ENCODE measurements at regions of chr1 and their contacts with region 1.

Region 1: DNA sequence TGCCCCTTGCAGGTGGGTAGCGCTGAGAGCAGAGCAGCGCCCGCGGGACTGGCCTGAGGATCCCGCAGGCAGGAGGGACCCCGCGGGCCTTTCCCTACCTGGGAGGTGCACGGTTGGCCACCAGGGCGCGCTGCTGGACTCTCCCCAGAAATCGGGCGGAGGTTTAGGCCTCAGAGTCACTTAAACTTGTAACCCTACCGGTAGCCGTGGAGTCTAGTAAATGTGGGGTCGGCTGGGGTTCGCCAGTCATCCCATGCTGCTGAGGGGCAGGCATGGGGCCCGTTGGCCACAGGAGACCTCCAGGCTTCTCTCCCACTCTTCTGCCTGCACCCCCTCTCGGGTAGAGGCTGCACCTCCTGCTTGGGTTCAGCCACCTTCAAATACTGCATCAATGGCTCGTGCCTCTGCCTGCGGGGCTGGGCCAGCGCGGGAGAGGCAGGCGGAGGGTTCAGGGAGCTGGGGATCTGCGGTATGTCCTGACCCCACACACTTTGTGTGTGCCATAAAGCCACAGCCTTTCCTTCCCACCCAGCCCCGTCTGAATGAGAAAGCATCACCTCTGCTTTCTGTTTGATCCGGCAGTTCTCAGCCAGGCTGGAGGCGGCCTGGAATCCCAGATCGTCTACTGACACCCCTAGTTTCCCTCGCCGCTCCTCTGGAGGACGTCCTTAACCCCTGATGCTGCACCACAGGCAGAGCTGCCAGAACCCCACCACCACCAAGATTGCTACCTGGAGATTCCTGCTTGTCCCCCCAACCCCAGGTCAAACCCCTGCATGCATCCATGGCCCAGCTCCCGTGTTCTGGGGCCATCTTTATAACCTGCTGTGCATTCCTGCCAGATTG is 12.3 kb upstream of the GSTM4 start:
- DNase-seq: peak; percentile 93
- ATAC-seq: peak; percentile 98
- H3K4me3 Mint-ChIP-seq: no peak overlapping the region
- H3K27ac Mint-ChIP-seq: peak overlapping the region; percentile 25
- H3K4me1 Mint-ChIP-seq: peaks cover 18% of the 10 kb centered on the region
- H3K27me3 Mint-ChIP-seq: peaks cover 8% of the 10 kb centered on the region

Region 2: GRCh38 chr1:109357616-109358015 is 286.0 kb before region 1 on chr1:
- CTCF ChIA-PET with region 1: no interaction called
- POLR2A ChIA-PET with region 1: no interaction called
- DNase-seq: no peak
- ATAC-seq: no peak
- H3K4me3 Mint-ChIP-seq: no peak overlapping the region
- H3K27ac Mint-ChIP-seq: no peak overlapping the region
- H3K4me1 Mint-ChIP-seq: peaks cover 9% of the 10 kb centered on the region
- H3K27me3 Mint-ChIP-seq: peaks cover 16% of the 10 kb centered on the region

Region 3: GRCh38 chr1:109532365-109533136 is 111.1 kb before region 1 on chr1:
- CTCF ChIA-PET with region 1: interaction called, 19 read pairs
- POLR2A ChIA-PET with region 1: no interaction called
- DNase-seq: peak; percentile 94
- ATAC-seq: peak; percentile 88
- H3K4me3 Mint-ChIP-seq: peak overlapping the region; percentile 53
- H3K27ac Mint-ChIP-seq: peak overlapping the region; percentile 96
- H3K4me1 Mint-ChIP-seq: peaks cover 36% of the 10 kb centered on the region
- H3K27me3 Mint-ChIP-seq: no peaks in the 10 kb centered on the region

Region 4: DNA sequence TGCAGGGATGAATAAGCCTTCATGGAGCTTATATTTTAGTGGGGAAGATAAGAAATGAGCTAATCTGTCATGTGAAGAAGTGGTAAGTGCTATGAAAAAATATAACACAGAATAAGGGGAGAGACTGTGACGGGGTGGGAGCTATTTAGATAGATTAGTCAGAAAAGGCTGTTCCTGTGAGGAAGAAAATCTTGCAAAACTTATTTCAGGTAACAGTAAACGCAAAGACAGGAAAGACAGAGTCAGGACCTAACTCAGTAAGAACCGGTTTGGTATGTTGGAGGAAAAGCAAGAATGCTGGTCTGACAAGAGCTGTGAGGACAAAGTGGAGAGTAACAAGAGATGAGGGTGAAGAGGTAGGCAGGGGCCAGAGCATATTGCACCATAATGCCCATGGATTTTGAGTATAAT is 73.2 kb before region 1 on chr1:
- CTCF ChIA-PET with region 1: interaction called, 15 read pairs
- POLR2A ChIA-PET with region 1: no interaction called
- DNase-seq: no peak
- ATAC-seq: no peak
- H3K4me3 Mint-ChIP-seq: no peak overlapping the region
- H3K27ac Mint-ChIP-seq: no peak overlapping the region
- H3K4me1 Mint-ChIP-seq: no peaks in the 10 kb centered on the region
- H3K27me3 Mint-ChIP-seq: no peaks in the 10 kb centered on the region

Region 5: DNA sequence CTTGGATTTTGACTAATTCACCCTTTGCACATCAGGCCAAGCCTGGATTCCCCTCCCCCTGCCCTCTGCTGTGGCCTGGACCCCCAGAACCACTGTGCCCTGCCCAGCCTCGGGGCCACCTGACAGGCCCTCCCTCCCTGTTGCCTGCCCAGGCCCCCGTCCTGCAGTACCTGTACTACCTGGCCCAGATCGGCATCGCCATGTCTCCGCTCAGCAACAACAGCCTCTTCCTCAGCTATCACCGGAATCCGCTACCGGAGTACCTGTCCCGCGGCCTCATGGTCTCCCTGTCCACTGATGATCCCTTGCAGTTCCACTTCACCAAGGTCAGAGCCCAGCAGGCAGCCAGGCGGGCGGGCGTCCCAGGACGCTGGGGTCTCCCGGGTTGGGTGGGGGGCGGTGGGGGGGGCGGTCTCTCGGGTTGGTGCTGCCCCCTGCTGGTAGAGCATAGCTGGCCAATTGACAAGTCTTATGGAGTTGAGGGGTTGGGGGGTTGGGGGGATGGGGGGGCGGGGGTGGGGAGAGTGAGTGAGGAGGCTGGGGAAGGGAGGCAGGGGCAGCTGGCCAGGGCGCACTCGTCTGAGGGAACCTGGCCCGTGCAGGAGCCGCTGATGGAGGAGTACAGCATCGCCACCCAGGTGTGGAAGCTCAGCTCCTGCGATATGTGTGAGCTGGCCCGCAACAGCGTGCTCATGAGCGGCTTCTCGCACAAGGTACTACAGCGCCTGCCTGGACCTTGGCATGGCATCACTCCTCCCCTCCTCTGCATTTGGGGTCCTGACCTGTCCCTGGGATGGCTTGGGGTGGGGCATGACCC is 13.3 kb before region 1 on chr1:
- CTCF ChIA-PET with region 1: interaction called, 129 read pairs
- POLR2A ChIA-PET with region 1: no interaction called
- DNase-seq: no peak
- ATAC-seq: no peak
- H3K4me3 Mint-ChIP-seq: no peak overlapping the region
- H3K27ac Mint-ChIP-seq: no peak overlapping the region
- H3K4me1 Mint-ChIP-seq: peaks cover 20% of the 10 kb centered on the region
- H3K27me3 Mint-ChIP-seq: no peaks in the 10 kb centered on the region

Region 6: GRCh38 chr1:109718491-109718890 is 74.9 kb after region 1 on chr1:
- CTCF ChIA-PET with region 1: interaction called, 11 read pairs
- POLR2A ChIA-PET with region 1: no interaction called
- DNase-seq: no peak
- ATAC-seq: no peak
- H3K4me3 Mint-ChIP-seq: no peak overlapping the region
- H3K27ac Mint-ChIP-seq: peak overlapping the region; percentile 47
- H3K4me1 Mint-ChIP-seq: no peaks in the 10 kb centered on the region
- H3K27me3 Mint-ChIP-seq: peaks cover 13% of the 10 kb centered on the region

Region 7: GRCh38 chr1:109773146-109773899 is 129.7 kb after region 1 on chr1:
- CTCF ChIA-PET with region 1: interaction called, 340 read pairs
- POLR2A ChIA-PET with region 1: interaction called, 4 read pairs
- DNase-seq: peak; percentile 85
- ATAC-seq: peak; percentile 90
- H3K4me3 Mint-ChIP-seq: no peak overlapping the region
- H3K27ac Mint-ChIP-seq: no peak overlapping the region
- H3K4me1 Mint-ChIP-seq: peaks cover 27% of the 10 kb centered on the region
- H3K27me3 Mint-ChIP-seq: peaks cover 10% of the 10 kb centered on the region

Region 8: DNA sequence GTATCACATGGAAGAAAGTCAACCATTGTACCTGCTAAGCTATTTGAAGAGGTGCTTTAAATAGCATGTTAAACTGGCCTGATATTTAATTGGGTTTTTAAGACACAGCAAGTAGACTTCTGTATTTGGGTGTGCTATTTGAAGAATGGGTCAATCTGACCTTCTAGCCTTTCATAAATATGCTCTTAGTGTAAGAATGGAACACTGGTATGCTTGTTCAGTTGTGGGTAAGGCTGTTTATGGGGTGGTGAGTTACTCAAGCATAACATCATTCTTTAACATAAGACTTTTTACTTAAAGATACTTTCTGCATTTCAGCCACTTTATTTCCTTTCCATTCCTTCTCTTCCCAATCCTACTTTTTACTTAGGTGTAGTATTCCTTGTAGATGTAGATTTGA is 362.4 kb after region 1 on chr1:
- CTCF ChIA-PET with region 1: interaction called, 25 read pairs
- POLR2A ChIA-PET with region 1: no interaction called
- DNase-seq: no peak
- ATAC-seq: no peak
- H3K4me3 Mint-ChIP-seq: no peak overlapping the region
- H3K27ac Mint-ChIP-seq: no peak overlapping the region
- H3K4me1 Mint-ChIP-seq: peaks cover 17% of the 10 kb centered on the region
- H3K27me3 Mint-ChIP-seq: no peaks in the 10 kb centered on the region

Measured in activated CD8-positive, alpha-beta T cell treated with anti-CD3 and anti-CD28 coated beads, Interleukin-2, amount 10 ng/mL, durations not matched to agents 7 days and 5 days (primary cell).